Activated B cell treated with CpG ODN at 0.5 μM for 24 hours (primary cell): ENCODE measurements at regions of chr11 and their contacts with region 1.

Region 1: DNA sequence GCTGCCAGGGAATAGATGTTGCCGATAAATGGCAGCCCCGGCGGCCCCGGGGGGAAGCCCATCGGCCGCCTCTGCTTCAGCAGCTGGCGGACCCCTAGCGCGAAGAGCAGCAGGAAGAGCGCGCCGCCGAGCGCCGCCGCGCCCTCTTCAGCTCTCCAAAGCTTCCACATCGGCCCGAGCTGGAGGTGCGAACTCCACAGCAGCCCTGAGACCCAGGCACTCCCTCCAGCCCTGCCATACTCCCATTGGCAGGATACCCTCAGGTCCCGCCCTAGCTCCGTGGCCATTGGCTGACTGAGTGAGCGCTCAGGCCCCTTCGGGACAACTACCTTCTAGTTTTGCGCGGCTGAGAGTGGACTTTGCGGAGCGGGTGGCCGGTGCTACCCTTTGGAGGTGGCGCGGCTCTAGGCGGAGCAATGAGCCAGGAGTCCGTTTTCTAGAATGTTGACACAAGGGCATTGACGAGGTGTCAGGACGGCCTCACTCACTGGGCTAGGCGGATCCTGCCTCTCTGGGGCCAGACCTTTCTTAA is at the start of gene CYP2R1:
- DNase-seq: peak; percentile 85
- ATAC-seq: peak; percentile 84
- H3K4me3 Mint-ChIP-seq: peak within 1 kb of the TSS; percentile 94
- H3K27ac Mint-ChIP-seq: peak within 1 kb of the TSS; percentile 97
- H3K4me1 Mint-ChIP-seq: peaks cover 26% of the 10 kb centered on the region
- H3K27me3 Mint-ChIP-seq: no peaks in the 10 kb centered on the region
- CTCF ChIP-seq: no peak
- total RNA-seq, gene CYP2R1: 20.1 and 22.0 TPM in 2 replicates

Region 2: GRCh38 chr11:13668102-13668956 is 1223.8 kb before region 1 on chr11 and contains the start of gene FAR1:
- CTCF ChIA-PET with region 1: no interaction called
- POLR2A ChIA-PET with region 1: interaction called, 5 read pairs
- intact Hi-C with region 1: loop called (anchors 5 kb)
- DNase-seq: peak; percentile 93
- ATAC-seq: peak; percentile 91
- H3K4me3 Mint-ChIP-seq: peak within 1 kb of the TSS; percentile 99
- H3K27ac Mint-ChIP-seq: peak within 1 kb of the TSS; percentile 95
- H3K4me1 Mint-ChIP-seq: peaks cover 44% of the 10 kb centered on the region
- H3K27me3 Mint-ChIP-seq: peaks cover 7% of the 10 kb centered on the region
- CTCF ChIP-seq: no peak
- total RNA-seq, gene FAR1: 39.2 and 48.4 TPM in 2 replicates

Region 3: DNA sequence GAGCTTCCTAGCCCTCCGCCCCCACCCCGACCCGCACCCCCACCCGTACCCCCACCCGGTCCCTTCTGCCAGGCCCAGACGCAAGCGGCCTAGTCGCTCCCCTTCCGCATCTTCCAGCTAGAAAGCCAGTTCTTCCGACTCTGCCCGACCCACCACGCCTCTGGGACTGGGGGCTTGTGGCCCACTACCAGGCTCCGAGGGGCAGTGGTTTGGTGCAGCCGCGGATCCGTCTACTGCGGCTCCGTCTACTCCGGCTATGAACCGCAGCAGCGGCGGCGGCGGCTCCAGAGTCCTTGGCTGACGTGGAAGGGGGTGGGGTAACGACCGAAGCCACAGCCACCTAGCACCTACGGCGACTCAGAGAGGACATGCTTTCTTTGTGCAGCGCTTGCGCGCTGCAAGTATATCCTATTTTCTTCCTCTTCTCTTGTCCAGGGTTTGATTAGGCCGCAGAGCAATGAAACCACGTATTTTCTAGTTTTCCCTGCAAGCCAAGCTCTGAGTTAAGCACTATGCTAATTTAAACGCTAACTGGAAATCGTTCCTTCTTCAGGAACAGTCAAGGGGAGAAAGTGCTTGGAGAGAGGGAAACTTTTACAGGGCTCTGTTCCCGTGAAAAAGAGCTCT is 392.4 kb before region 1 on chr11 and contains the start of gene COPB1:
- CTCF ChIA-PET with region 1: no interaction called
- POLR2A ChIA-PET with region 1: interaction called, 15 read pairs
- intact Hi-C with region 1: loop called (anchors 1 kb)
- DNase-seq: peak; percentile 81
- ATAC-seq: peak; percentile 95
- H3K4me3 Mint-ChIP-seq: peak within 1 kb of the TSS; percentile 100
- H3K27ac Mint-ChIP-seq: peak within 1 kb of the TSS; percentile 96
- H3K4me1 Mint-ChIP-seq: peaks cover 41% of the 10 kb centered on the region
- H3K27me3 Mint-ChIP-seq: no peaks in the 10 kb centered on the region
- CTCF ChIP-seq: no peak
- total RNA-seq, gene COPB1: 80.7 and 90.1 TPM in 2 replicates

Region 4: DNA sequence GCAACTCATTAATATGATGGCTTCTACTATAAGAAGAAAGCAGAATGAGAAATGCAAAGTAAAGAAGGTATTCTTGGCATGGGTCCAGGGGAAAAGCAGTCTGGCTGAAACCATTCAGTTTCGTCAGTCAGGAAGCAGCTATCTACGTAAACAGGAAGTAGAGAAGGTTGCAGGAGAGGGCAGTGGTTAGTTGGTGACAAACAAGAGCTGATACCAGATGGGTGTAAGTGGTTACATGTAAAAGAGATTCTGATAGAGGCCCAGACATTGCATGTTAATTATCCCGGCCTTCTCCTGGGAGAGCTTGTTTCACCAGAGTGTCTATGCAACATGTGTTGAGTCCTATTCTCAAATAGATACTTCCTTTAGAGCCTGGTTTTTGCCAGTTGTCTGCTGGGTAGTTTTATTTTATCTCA is 313.6 kb before region 1 on chr11:
- CTCF ChIA-PET with region 1: no interaction called
- POLR2A ChIA-PET with region 1: interaction called, 13 read pairs
- intact Hi-C with region 1: no loop called
- DNase-seq: no peak
- ATAC-seq: peak; percentile 94
- H3K4me3 Mint-ChIP-seq: peak overlapping the region; percentile 50
- H3K27ac Mint-ChIP-seq: peak overlapping the region; percentile 77
- H3K4me1 Mint-ChIP-seq: peaks cover 33% of the 10 kb centered on the region
- H3K27me3 Mint-ChIP-seq: peaks cover 1% of the 10 kb centered on the region
- CTCF ChIP-seq: no peak

Region 5: DNA sequence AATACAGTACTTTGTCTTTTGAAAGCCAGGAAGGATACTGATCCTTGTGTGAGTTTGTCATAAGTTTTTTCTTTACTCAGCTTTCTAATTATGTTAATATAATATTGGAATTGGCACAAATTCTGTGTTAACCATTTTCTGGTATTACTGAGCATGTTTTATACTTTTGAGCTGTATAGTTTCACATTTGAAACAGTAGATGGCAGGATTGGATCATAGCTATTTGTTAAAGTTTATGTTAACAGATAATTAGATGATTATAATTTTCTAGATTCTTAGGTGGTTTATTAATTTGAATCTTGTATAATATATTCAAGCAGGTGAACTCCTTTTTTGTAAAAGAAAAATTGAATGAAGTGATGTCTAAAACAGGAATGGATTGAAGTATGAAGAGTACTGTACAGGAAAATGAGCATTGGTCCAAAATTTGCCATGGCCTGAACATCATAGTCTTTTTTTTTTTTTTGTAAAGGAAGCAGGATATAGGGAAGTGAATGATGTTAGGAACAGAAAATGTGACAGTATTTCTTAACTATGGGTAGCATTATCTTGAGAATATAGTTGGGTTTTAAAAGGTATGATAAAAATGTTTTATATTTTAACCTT is 102.1 kb before region 1 on chr11:
- CTCF ChIA-PET with region 1: interaction called, 4 read pairs
- POLR2A ChIA-PET with region 1: interaction called, 5 read pairs
- intact Hi-C with region 1: loop called (anchors 5 kb)
- DNase-seq: no peak
- ATAC-seq: no peak
- H3K4me3 Mint-ChIP-seq: no peak overlapping the region
- H3K27ac Mint-ChIP-seq: no peak overlapping the region
- H3K4me1 Mint-ChIP-seq: no peaks in the 10 kb centered on the region
- H3K27me3 Mint-ChIP-seq: no peaks in the 10 kb centered on the region
- CTCF ChIP-seq: peak; percentile 33

Region 6: GRCh38 chr11:16738193-16738946 is 1846.3 kb after region 1 on chr11 and contains the start of gene C11orf58:
- CTCF ChIA-PET with region 1: no interaction called
- POLR2A ChIA-PET with region 1: no interaction called
- intact Hi-C with region 1: loop called (anchors 2 kb)
- DNase-seq: peak; percentile 86
- ATAC-seq: peak; percentile 97
- H3K4me3 Mint-ChIP-seq: peak within 1 kb of the TSS; percentile 74
- H3K27ac Mint-ChIP-seq: no peak within 1 kb of the TSS
- H3K4me1 Mint-ChIP-seq: peaks cover 21% of the 10 kb centered on the region
- H3K27me3 Mint-ChIP-seq: no peaks in the 10 kb centered on the region
- CTCF ChIP-seq: no peak
- total RNA-seq, gene C11orf58: 112 and 130 TPM in 2 replicates